Sigmoid colon (tissue), 7 donors: ENCODE measurements at regions of chr3 and their contacts with region 1.

Region 1: DNA sequence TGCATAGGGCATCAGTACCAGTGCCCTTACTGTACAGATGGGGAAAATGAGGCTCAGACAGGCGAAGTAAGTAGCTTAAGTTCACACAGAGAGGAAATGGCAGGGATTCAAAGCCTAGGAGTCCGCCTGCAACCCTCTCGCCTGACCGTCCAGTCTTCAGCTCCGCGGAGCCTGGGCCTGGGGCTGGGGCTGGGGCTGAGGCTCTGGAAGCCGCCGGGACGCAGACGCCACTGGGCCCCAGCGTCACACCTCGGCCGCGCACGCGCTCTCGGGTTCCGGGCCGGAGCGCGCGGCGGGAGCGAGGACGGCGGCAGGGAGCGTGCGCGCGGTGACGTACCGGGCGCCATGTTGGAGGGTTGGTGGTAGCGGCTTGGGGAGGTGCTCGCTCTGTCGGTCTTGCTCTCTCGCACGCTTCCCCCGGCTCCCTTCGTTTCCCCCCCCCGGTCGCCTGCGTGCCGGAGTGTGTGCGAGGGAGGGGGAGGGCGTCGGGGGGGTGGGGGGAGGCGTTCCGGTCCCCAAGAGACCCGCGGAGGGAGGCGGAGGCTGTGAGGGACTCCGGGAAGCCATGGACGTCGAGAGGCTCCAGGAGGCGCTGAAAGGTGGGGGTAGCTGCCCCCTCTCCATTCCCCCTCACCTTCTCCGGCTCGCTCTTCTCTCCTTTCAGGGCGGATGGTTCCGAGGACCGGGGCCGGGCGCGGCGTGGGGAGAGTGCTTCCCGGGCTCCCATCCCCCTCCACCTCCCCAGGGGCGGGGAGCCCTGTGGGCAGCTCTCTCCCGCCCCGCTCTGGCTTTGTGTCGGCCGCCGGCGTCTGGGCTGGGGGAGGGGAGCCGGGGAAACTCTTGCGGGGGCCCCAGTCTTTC is at the start of gene PPP4R2:
- DNase-seq: peak; percentile 93
- H3K4me3 ChIP-seq: peak within 1 kb of the TSS; percentile 88 to 94 (median 92)
- H3K27ac ChIP-seq: peak within 1 kb of the TSS; percentile 98 to 99 (median 98)
- H3K4me1 ChIP-seq: peaks cover 0 to 53% (median 42%) of the 10 kb centered on the region in 4 donors
- H3K27me3 ChIP-seq: no peaks in the 10 kb centered on the region
- CTCF ChIP-seq: no peak
- EP300 ChIP-seq: no peak
- POLR2A ChIP-seq: peak; percentile 69 to 75
- total RNA-seq, gene PPP4R2: 28.8 to 53.2 (median 38.3) TPM

Region 2: GRCh38 chr3:72847751-72848702 is 148.7 kb before region 1 on chr3 and contains the start of gene SHQ1:
- intact Hi-C with region 1: loop called (anchors 5 kb)
- DNase-seq: peak; percentile 98
- H3K4me3 ChIP-seq: peak within 1 kb of the TSS; percentile 67 to 81 (median 74)
- H3K27ac ChIP-seq: peak within 1 kb of the TSS; percentile 81 to 87 (median 82)
- H3K4me1 ChIP-seq: peaks cover 0 to 23% (median 18%) of the 10 kb centered on the region in 4 donors
- H3K27me3 ChIP-seq: no peaks in the 10 kb centered on the region
- CTCF ChIP-seq: no peak
- EP300 ChIP-seq: no peak
- POLR2A ChIP-seq: peak in 1 of 2 donors; percentile 36
- total RNA-seq, gene SHQ1: 8.2 to 17.4 (median 11.7) TPM

Region 3: GRCh38 chr3:72887705-72888545 is 108.8 kb before region 1 on chr3 and contains the start of gene GXYLT2:
- intact Hi-C with region 1: loop called (anchors 5 kb)
- DNase-seq: peak; percentile 83
- H3K4me3 ChIP-seq: peak within 1 kb of the TSS; percentile 37 to 55 (median 50)
- H3K27ac ChIP-seq: peak within 1 kb of the TSS; percentile 63 to 70 (median 68)
- H3K4me1 ChIP-seq: peaks cover 0 to 24% (median 17%) of the 10 kb centered on the region in 4 donors
- H3K27me3 ChIP-seq: no peaks in the 10 kb centered on the region
- CTCF ChIP-seq: no peak
- EP300 ChIP-seq: no peak
- POLR2A ChIP-seq: no peak
- total RNA-seq, gene GXYLT2: 3.1 to 17.4 (median 7.3) TPM

Region 4: DNA sequence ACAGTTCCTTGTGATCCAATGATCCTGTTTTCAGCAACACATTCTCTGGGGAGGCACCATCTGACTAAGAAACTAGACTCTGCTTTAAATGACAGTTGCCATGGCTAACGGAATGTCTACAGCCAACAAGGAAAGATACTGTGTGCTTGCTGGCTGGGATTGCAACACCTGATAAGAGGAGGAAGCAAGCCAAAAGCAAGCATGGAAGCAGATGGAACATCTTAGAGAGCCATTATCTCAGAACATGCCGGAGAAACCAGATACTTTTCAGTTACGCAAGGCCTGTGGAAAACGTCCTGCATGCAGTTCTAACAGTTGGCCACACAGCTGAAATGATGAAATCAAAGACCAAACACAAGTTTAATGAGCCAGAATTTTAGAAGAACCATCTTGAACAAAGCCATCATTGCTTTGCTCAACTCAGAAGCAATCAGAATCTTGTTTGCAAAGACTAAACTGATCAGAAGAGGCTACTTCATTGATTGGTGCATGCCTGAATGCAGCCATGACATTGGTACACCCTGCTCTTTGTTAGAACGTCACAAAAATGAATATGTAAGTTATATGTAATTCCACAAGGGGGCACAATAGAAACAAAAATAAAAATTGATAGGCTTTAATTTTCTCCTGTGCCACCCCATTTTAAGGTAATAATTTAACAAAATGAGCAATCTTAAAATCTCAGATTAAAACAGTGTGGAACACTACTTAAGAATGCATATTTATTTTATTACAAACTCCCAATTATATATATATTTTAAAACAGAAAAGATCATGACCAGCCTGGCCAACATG is 58.0 kb before region 1 on chr3:
- intact Hi-C with region 1: loop called (anchors 2 kb)
- DNase-seq: peak; percentile 86
- H3K4me3 ChIP-seq: no peak overlapping the region
- H3K27ac ChIP-seq: peak overlapping the region; percentile 21 to 52 (median 44)
- H3K4me1 ChIP-seq: peaks cover 0 to 13% (median 4%) of the 10 kb centered on the region in 4 donors
- H3K27me3 ChIP-seq: no peaks in the 10 kb centered on the region
- CTCF ChIP-seq: peak; percentile 60 to 88 (median 87)
- EP300 ChIP-seq: no peak
- POLR2A ChIP-seq: no peak

Region 5: GRCh38 chr3:73041537-73041936 is 44.8 kb after region 1 on chr3:
- intact Hi-C with region 1: loop called (anchors 5 kb)
- DNase-seq: no peak
- H3K4me3 ChIP-seq: no peak overlapping the region
- H3K27ac ChIP-seq: peak overlapping the region in 3 of 4 donors; percentile 20 to 43 (median 29)
- H3K4me1 ChIP-seq: peaks cover 0 to 80% (median 49%) of the 10 kb centered on the region in 4 donors
- H3K27me3 ChIP-seq: no peaks in the 10 kb centered on the region
- CTCF ChIP-seq: no peak
- EP300 ChIP-seq: no peak
- POLR2A ChIP-seq: no peak

Region 6: DNA sequence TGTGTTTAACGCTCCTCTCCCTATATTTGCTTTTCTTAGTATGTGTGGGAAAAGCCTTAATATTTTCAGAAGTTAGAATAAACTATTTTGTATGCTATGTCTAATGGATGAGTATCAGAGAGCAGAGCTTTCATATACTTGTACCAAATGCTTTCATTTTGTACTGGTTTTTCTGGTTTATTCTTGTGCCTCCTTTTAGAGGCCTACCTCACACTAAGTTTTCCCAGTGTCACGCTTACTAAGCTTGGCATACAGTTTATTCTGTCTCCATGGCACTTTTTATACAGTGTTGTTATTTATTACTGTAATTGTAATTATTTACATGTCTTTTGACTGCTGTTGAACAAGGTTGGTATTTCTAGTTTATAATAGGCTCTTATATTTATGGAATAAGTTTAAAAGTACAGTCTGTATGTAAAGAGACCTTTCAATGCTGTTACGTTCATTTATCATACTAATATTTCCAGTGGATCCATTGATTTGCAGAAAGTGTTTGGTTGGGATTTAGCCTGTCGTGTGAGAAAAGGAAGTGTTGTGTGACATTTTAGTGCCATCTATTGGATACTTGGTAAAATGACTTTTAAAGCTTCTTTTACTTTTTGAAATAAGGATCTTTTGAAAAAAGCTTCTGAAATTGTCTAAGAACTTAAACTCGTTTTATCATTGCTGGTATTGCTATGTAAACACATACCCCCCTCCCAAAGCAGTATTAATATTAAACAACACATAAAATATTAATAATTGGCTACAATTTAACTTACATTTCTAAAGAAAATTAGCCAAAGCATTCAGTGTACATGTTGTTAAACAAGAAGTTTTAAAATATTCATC is 59.5 kb after region 1 on chr3:
- intact Hi-C with region 1: loop called (anchors 5 kb)
- DNase-seq: no peak
- H3K4me3 ChIP-seq: no peak overlapping the region
- H3K27ac ChIP-seq: peak overlapping the region in 1 of 4 donors; percentile 21
- H3K4me1 ChIP-seq: peaks cover 0 to 35% (median 18%) of the 10 kb centered on the region in 4 donors
- H3K27me3 ChIP-seq: no peaks in the 10 kb centered on the region
- CTCF ChIP-seq: peak; percentile 22 to 52 (median 42)
- EP300 ChIP-seq: no peak
- POLR2A ChIP-seq: no peak

Region 7: GRCh38 chr3:73868688-73869315 is 872.1 kb after region 1 on chr3:
- intact Hi-C with region 1: no loop called
- DNase-seq: no peak
- H3K4me3 ChIP-seq: no peak overlapping the region
- H3K27ac ChIP-seq: no peak overlapping the region
- H3K4me1 ChIP-seq: no peaks in the 10 kb centered on the region
- H3K27me3 ChIP-seq: no peaks in the 10 kb centered on the region
- CTCF ChIP-seq: peak; percentile 16 to 64 (median 41)
- EP300 ChIP-seq: no peak
- POLR2A ChIP-seq: no peak